GM13977 (cell line): ENCODE measurements at regions of chr17 and their contacts with region 1.

Region 1: DNA sequence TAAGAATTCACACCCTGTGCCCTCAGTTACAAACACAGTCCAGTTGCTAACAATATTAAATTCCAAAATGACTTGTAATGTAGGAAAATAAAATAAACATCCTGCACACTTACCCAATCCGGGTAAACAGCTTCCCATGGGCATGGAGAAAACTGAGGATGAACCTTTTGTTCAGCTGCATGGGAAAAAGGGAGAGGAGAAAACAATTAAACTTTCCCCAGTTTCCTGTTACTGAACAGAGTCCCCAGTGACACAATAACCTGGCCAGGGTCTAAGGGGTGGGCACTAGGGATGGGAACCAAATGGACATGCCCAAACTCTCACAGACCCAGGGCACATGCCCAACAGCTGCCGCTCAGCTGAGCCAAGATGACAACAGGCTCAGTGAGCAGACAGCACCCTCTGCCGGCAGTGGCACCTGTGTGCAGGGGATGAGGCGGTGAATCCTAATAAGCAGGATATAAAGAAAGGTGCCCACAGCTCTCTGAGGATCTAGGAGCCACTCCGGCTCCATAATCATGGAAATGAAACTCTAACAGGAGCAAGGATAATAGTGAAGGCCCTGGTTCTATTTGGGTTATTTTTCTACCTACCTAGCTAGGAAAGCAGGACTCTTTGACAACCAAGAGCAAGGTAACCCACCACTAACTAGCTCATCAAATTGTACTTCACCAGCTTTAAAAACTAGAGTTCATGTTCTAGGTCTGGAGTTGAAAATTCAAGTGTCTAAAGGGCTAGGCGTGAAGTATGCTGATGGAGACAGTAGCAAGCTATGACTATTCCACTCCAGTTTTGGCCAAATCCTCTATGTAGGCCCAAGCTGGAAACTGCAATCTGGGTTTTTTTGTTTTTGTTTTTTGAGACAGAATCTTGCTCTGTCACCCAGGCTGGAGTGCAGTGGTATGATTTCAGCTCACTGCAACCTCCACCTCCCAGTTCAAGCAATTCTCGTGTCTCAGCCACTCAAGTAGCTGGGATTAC is 58.8 kb downstream of the SMG6 start:
- DNase-seq: peak; percentile 70
- CTCF ChIP-seq: peak; percentile 99

Region 2: GRCh38 chr17:2064980-2065785 is 179.7 kb before region 1 on chr17:
- in situ Hi-C with region 1: loop called (anchors 10 kb)
- DNase-seq: peak; percentile 76
- CTCF ChIP-seq: peak; percentile 76

Region 3: DNA sequence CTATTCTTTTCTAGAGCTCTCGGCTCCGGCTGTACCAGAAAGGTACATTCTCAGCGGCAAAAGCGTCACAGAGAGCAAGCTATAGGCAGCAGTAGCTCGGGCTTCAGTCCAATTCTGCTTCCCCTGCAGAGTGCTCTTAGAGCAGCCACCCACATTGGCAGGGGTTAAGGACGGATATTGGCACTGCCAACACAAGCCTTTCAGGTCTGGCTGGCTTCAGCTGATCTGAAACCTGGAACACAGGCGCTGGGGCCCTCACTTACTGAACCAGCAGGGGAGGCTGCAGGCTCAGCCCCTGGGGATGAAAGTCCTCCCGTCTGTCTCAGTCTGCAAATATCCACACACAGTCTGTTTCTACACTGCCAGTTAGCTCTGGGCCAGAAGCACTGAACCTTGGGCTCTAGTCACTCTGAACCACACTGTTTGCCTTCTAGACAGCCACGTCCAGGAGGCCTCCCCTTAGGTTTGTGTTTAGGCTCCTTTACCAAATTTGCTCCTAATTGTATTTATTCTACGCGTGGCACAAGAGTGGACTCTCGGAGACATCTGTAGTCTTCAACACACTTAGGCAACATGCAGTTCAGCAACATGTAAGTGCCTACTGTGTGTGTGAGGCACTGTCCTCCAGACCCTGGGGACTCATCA is 149.8 kb before region 1 on chr17:
- in situ Hi-C with region 1: loop called (anchors 10 kb)
- DNase-seq: no peak
- CTCF ChIP-seq: peak; percentile 61

Region 4: GRCh38 chr17:2401426-2402221 is 156.8 kb after region 1 on chr17:
- in situ Hi-C with region 1: no loop called
- DNase-seq: peak; percentile 97
- CTCF ChIP-seq: no peak